ENCODE measurements at regions of chr14 and their contacts with region 1.

Region 1: DNA sequence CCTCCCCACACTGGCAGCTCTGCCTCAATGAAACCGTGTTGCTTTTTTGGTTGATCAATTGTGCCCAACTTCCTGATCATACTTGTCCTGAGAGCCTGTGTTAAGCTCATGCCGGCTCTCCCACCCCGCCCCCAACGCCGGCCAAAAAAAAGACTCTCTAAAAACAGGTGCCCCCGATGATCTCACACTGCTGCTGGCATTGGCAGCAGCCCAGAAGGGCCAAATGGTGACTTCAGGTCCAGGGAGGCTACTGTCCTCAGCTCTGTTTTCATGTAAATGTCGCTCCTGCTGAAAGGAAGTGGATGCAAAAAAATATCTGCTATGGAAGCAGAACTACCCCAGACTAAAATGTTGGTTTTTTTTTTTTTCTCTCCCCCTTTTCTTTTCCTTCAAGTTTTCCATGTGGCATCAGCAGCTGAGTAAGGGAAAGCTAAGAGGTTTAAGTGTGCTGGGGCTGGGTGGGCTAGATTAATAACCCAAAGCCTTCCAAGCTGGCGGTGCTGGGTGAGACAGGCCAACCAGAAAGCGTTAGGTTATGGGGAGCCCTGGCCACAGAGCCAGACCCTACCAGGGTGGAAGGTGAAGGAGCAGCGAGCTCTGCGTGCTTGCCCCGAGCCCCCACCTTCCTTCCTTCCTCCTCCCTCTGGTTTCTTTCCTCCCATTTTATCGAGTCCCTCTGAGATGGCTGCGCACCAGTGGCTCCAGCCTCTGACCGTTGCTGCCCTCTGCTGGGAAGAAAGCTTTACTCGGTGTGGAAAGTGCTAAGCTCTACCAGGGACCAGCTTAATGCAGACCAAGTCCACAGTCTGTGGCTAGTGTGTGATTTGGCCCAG is 396.1 kb downstream of the NRXN3 start:
- DNase-seq: peak; percentile 72
- CTCF ChIP-seq: peak; percentile 84

Region 2: GRCh38 chr14:77660754-77661153 is 905.5 kb before region 1 on chr14:
- in situ Hi-C with region 1: loop called (anchors 25 kb)
- DNase-seq: no peak
- CTCF ChIP-seq: no peak

Region 3: DNA sequence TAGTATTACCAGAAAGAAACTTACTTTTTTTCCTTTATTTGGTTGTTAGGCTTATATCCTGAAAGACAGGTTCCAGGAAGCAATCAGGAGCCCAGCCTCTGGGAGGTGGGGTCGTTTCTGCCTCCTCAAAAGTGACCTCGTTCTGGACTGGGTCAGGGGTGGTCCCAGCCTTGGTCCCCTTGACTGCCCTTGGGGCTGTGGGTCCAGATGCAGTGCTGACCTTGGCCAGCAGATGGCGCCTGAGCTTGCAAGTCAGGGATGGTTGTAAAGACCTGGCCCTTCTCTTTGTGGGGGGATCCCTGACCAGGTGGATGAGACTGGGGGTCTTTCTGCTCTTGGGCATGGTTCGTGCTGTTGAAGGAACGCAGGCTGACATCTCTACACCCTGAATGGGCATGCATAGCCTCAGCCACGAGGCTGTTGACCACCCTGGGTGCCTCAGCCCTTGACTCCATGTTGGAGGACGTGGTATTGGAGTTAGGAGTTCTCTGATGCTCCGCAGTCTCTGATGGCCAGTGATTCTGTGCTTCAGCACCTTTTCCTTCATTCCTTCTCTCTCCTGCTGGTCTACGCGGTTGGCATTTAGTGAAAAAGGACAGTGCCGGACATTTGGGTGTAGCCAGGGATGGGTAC is 704.0 kb before region 1 on chr14:
- in situ Hi-C with region 1: loop called (anchors 25 kb)
- DNase-seq: peak; percentile 87
- CTCF ChIP-seq: peak; percentile 98

Region 4: DNA sequence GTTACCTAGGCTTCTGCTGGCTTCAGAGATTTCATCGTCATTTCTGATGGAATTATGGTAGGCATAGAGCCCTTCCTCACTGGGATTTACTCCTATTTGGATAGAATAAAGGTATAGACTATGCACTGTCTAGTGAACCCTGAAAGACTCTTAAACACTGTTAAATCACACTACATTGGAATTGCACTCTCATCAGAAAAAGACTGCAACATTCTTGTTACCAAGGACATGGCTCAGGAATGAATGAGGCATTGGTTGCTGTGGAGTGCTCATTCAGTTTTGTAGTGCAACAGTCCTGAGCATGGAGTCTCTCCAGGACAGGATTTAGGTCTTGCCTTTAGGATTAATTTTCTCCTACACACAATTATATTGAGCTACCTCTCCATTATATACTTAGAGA is 86.9 kb after region 1 on chr14:
- in situ Hi-C with region 1: no loop called
- DNase-seq: no peak
- CTCF ChIP-seq: no peak